ENCODE measurements at regions of chr3 and their contacts with region 1.

Region 1: GRCh38 chr3:71219744-71220638 is 363.5 kb downstream of the FOXP1 start:
- DNase-seq: no peak
- H3K4me3 ChIP-seq: no peak overlapping the region
- CTCF ChIP-seq: no peak

Region 2: GRCh38 chr3:71172951-71173350 is 47.0 kb before region 1 on chr3:
- in situ Hi-C with region 1: loop called (anchors 5 kb)
- DNase-seq: no peak
- H3K4me3 ChIP-seq: no peak overlapping the region
- CTCF ChIP-seq: no peak

Region 3: DNA sequence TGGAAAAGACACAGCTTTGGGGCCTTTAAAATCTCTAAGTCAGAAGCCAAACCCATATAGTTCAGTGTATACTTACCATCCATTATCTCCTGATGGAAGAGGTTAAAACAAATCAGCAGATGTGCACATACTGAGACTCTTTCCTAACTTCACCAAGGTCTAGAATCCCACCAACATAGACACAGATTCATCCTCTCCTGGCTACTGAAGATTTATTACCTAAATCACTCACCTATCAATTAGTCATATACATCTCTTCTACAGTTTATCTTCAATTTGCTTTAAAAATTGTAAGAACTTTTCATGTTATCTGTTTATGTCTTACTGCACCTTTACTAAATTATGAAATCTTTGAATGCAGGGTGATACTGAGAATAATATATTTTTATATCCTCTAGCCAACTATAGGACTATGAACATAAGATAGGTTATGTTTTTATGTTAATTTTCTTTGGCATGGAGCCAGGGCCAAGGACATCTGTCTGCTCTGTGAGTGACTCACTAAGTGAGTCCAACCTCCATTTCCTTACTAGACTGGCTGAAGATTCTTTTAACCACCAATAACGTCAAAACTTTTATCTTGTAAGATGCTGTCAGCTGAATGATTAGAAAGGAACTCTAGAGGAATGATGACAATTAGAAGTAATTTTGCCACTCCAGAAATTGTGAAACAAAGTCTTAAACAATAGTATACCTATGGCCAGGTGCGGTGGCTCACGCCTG is 34.1 kb before region 1 on chr3:
- in situ Hi-C with region 1: no loop called
- DNase-seq: no peak
- H3K4me3 ChIP-seq: no peak overlapping the region
- CTCF ChIP-seq: no peak

Measured in astrocyte of the cerebellum (primary cell).